ENCODE measurements at regions of chr6 and their contacts with region 1.

Region 1: DNA sequence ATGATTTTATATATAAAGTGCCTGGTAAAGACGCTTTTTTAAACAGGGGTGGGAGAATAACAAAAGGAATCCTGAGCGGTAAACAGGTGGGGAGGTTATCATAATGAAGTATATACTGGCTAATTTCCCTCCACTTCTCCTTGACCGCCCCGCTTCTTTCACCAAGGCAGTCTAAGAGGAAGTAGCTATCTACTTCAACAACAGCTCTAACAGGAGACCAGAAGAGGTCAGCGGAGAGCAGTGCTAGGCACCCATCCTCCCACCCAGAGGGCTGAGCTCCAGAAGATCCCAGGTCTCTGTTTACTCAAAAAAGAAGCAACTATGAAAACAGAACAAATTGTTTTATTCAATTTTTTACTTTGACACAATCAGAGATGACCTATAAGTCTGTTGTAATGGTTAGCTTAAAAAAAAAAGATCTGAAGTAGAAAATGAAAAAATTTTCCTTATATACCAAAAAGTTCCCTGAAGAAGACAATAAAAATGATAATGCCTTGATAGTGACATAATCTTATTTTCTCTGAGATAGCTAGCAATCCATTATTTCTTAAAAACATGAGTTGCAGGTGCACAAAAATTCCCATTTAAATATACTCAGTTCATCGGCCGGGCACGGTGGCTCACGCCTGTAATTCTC is 141.1 kb downstream of the PDSS2 start:
- DNase-seq: peak; percentile 20 to 50
- ATAC-seq: peak in 7 of 8 donors; percentile 73 to 94 (median 87)
- H3K4me3 ChIP-seq: no peak overlapping the region
- H3K27ac ChIP-seq: no peak overlapping the region
- H3K4me1 ChIP-seq: peaks cover 0 to 7% (median 0%) of the 10 kb centered on the region in 9 donors
- H3K27me3 ChIP-seq: no peaks in the 10 kb centered on the region
- CTCF ChIP-seq: peak; percentile 18 to 82 (median 67)

Region 2: GRCh38 chr6:107459283-107460082 is 141.3 kb after region 1 on chr6 and contains the start of gene PDSS2:
- intact Hi-C with region 1: loop called in 1 of 10 experiments (anchors 10 kb)
- DNase-seq: peak; percentile 98 to 99
- ATAC-seq: peak; percentile 98 to 99 (median 99)
- H3K4me3 ChIP-seq: peak within 1 kb of the TSS; percentile 56 to 97 (median 80)
- H3K27ac ChIP-seq: peak within 1 kb of the TSS; percentile 85 to 97 (median 90)
- H3K4me1 ChIP-seq: peaks cover 0 to 32% (median 19%) of the 10 kb centered on the region in 9 donors
- H3K27me3 ChIP-seq: no peaks in the 10 kb centered on the region
- CTCF ChIP-seq: peak in 8 of 9 donors; percentile 26 to 69 (median 48)
- total RNA-seq, gene PDSS2: 15.5 to 22.2 (median 19.7) TPM

Region 3: DNA sequence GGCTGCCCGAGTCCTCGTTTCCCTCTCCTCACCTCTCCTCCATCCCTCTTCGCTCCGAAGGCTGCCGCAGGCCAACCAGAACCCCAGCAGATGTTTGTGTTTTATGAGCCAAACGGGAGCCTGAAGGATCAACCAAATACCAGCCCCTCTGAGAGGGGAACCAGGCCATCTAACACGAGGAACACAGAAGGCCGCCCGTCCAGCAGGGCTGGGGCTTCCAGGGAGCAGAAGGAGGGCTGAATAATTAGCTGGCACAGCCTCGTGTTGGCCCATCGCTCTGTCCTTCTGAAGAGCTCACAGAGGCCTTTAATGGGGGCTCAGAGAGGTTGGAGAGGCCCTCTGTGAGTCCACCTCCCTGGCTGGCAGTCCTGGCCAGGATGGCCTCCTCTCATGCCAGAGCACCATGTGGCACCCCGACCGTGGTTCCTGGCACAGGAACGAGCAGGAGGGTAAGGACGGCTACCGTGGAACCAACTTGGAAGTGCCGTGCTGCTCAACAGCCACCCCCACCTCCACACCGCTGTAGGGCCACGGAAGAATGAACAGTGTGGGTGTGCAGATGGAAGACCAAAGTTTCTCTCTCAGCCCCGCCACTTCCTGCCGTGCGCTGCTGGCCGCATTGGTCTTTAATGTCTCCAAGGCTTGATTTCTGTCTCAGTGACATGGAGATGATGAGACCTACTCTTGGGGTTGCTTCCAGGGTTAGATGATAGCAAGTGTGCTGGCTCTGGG is 350.7 kb after region 1 on chr6:
- intact Hi-C with region 1: loop called in 3 of 10 experiments (anchors 10 kb)
- DNase-seq: no peak
- ATAC-seq: no peak
- H3K4me3 ChIP-seq: no peak overlapping the region
- H3K27ac ChIP-seq: no peak overlapping the region
- H3K4me1 ChIP-seq: peaks cover 7 to 34% (median 18%) of the 10 kb centered on the region in 9 donors
- H3K27me3 ChIP-seq: no peaks in the 10 kb centered on the region
- CTCF ChIP-seq: no peak

Region 4: DNA sequence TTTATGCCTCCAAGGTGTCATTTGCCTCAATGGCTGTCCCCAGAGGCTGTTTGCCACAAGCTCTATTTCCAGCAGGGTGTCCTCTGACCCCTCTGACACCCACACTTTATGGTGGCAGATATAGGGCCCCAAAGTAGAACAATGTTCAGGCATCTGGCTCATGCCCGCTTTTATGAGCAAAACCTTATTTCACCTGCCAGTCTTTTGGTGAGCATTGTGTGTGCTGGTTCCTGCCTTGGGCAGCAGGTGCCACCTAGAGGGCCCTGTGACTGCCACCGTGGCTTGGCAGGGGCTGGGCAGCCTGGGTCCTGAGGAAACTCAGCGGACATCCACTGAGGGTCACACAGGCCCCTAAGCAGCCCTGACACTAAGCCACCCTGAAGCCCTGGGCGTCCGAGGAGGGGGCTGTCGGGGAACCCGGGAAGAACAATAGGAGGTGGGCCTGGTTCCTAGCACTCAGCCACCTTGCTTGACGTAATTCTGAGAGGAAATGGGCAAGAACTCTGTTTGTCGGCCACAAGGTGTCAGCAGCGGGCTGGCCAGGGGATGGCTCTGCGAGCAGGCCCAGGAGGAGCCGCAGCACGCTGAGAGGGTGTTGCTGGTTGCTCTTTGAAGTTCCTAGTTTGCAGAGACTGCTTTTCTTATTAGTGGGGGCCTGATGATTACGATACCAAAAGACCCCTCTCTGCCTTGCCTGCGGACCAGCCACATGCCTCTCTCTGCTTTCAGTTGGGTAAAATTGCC is 356.9 kb after region 1 on chr6:
- intact Hi-C with region 1: loop called in 2 of 10 experiments (anchors 10 kb)
- DNase-seq: peak; percentile 88 to 89
- ATAC-seq: peak; percentile 85 to 96 (median 92)
- H3K4me3 ChIP-seq: peak overlapping the region in 7 of 10 donors; percentile 19 to 43 (median 28)
- H3K27ac ChIP-seq: peak overlapping the region in 2 of 10 donors; percentile 23 to 45
- H3K4me1 ChIP-seq: peaks cover 7 to 31% (median 19%) of the 10 kb centered on the region in 9 donors
- H3K27me3 ChIP-seq: no peaks in the 10 kb centered on the region
- CTCF ChIP-seq: peak; percentile 87 to 95 (median 92)

Region 5: GRCh38 chr6:107704347-107705013 is 386.3 kb after region 1 on chr6:
- intact Hi-C with region 1: loop called in 4 of 10 experiments (anchors 5 to 10 kb)
- DNase-seq: peak in 1 of 2 donors; percentile 49
- ATAC-seq: peak in 6 of 8 donors; percentile 52 to 73 (median 62)
- H3K4me3 ChIP-seq: peak overlapping the region in 2 of 10 donors; percentile 6 to 19
- H3K27ac ChIP-seq: no peak overlapping the region
- H3K4me1 ChIP-seq: peaks cover 0 to 4% (median 0%) of the 10 kb centered on the region in 9 donors
- H3K27me3 ChIP-seq: peaks cover 0 to 3% (median 0%) of the 10 kb centered on the region in 7 donors
- CTCF ChIP-seq: peak; percentile 78 to 89 (median 84)

Region 6: DNA sequence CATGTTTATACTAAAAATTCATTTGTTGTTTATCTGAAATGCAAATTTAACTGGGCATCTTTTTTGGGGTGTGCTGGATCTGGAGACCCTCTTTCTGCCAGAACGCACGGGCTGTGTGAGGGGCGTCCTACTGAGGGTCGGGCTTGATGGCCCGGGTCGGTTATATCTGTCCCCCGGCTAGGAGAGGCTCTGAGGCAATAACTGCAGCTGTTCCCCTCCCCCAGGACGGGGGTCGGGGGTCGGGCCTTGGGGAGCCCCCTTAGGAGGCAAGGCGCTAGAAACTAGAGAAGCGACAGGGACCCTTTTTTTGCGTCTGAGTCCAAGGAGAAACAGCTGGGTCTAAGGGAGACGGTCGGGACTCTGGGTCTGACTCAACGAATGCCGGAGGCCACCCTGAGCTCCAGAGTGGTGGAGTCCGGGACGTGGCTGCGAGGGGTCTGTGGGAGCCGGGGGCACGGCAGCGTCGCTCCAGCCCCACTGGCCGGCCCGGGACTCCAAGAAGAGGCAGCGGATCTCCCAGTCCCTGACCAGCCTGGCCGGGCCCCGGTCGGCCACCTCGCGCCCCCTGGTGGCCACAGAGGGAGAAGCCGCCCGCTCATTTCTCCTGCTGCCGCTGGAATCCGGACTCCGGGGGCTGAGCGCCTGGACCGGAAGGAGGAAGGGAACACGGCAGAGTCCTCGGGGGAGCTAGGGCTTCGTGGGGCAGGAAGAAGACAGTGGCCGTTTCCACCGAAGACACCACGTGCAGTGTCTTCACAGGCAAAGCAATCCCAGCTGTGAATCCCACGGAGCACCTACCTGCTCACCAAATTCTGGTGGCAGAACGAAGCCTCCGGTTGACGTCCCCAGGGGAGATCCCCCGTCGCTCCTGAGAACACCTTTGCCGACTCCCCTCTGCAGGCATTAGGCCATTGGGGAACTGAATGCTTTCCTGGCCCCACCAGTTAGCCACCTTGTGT is 529.9 kb after region 1 on chr6:
- intact Hi-C with region 1: loop called in 1 of 10 experiments (anchors 10 kb)
- DNase-seq: peak; percentile 80 to 88
- ATAC-seq: peak; percentile 90 to 98 (median 96)
- H3K4me3 ChIP-seq: peak overlapping the region; percentile 4 to 55 (median 46)
- H3K27ac ChIP-seq: peak overlapping the region in 1 of 10 donors; percentile 47
- H3K4me1 ChIP-seq: peaks cover 0 to 14% (median 10%) of the 10 kb centered on the region in 9 donors
- H3K27me3 ChIP-seq: peaks cover 0 to 23% (median 17%) of the 10 kb centered on the region in 7 donors
- CTCF ChIP-seq: peak; percentile 92 to 99 (median 97)

Measured in heart right ventricle (tissue), 16 donors.